Activated CD8-positive, alpha-beta memory T cell treated with anti-CD3 and anti-CD28 coated beads, Interleukin-2, amount 10 ng/mL, durations not matched to agents 7 days and 5 days (primary cell): ENCODE measurements at regions of chr10 and their contacts with region 1.

Region 1: GRCh38 chr10:32795598-32796183 is 162.3 kb downstream of the ITGB1 start:
- DNase-seq: no peak
- ATAC-seq: no peak
- H3K4me3 Mint-ChIP-seq: no peak overlapping the region
- H3K27ac Mint-ChIP-seq: no peak overlapping the region
- H3K4me1 Mint-ChIP-seq: no peaks in the 10 kb centered on the region
- H3K27me3 Mint-ChIP-seq: no peaks in the 10 kb centered on the region

Region 2: DNA sequence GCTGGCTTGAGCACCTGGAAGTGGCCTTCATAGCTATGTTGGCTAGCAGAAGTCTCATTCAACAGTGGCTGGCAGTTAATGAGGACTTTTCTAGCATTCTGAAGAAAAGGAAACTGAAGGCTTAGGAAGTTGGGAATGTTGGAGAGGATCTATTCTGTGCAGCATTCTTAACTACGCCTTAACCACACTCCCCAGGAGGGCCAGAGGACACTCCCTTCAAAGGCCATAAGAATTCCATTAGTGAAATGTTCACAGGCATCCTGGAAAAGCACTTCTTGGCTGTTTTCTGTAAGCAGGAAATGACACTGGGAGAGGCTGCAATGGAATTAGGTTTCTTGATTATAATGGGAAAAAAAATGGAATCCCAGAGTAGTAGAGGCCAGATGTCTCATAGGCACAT is 1056.0 kb before region 1 on chr10:
- CTCF ChIA-PET with region 1: no interaction called
- DNase-seq: no peak
- ATAC-seq: no peak
- H3K4me3 Mint-ChIP-seq: no peak overlapping the region
- H3K27ac Mint-ChIP-seq: no peak overlapping the region
- H3K4me1 Mint-ChIP-seq: peaks cover 2% of the 10 kb centered on the region
- H3K27me3 Mint-ChIP-seq: no peaks in the 10 kb centered on the region

Region 3: GRCh38 chr10:33008499-33009243 is 213.0 kb after region 1 on chr10:
- CTCF ChIA-PET with region 1: interaction called, 12 read pairs
- DNase-seq: peak; percentile 73
- ATAC-seq: peak; percentile 50
- H3K4me3 Mint-ChIP-seq: peak overlapping the region; percentile 50
- H3K27ac Mint-ChIP-seq: no peak overlapping the region
- H3K4me1 Mint-ChIP-seq: peaks cover 33% of the 10 kb centered on the region
- H3K27me3 Mint-ChIP-seq: peaks cover 9% of the 10 kb centered on the region